T-cell (primary cell): ENCODE measurements at regions of chr2 and their contacts with region 1.

Region 1: DNA sequence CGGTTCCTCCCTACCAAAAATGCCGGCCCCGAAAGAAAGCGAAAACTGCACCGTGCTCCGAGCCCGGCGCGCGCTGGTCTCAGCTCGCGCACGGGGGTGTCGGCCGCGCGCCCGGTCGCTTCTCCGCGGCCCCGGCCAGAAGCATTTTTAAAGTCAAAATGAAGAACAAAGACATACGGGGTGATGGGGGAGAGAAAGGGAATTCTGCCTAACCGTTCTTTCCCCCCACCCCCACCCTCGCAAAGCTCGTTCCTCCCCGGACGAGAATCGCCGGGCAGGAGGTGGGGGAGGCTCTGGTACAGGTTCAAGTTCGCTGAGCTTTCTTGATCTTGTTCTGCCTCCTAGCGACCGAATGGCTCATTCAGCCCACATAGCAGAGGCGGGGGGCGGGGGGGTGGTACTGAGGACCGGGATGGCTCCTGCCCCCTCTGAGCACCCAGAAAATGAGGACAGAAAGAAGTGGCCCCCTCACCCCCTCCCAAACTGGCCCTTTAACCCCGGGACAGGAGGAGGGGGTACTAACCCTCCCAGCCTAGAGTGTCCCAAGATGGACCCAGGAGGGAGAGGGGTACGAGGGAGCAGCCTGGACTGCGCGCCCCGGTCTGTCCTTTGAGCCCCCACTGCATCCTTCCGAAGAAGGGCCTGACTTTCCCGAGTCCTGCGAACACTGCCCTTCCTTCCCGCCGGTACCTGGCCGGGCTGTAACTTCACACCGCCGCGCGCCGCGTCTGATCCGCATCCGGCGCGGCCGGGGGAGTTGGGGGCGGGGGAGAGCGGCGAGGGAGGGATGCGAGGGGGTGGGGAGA is 3.1 kb downstream of the BCL11A start:
- DNase-seq: peak in 22 of 35 experiments; percentile 22 to 68 (median 42)
- ATAC-seq: peak; percentile 47 to 64 (median 55)
- H3K4me3 ChIP-seq: peak overlapping the region; percentile 54 to 97
- H3K4me3 Mint-ChIP-seq: peak overlapping the region; percentile 79 to 93 (median 82)
- H3K27ac ChIP-seq: no peak overlapping the region
- H3K27ac Mint-ChIP-seq: peak overlapping the region in 1 of 2 donors; percentile 59
- H3K4me1 ChIP-seq: peaks cover 32 to 62% of the 10 kb centered on the region in 2 experiments
- H3K4me1 Mint-ChIP-seq: peaks cover 30 to 45% (median 36%) of the 10 kb centered on the region in 3 donors
- H3K27me3 ChIP-seq: peaks cover 0 to 71% of the 10 kb centered on the region in 2 experiments
- H3K27me3 Mint-ChIP-seq: peaks cover 35 to 68% of the 10 kb centered on the region in 2 donors

Region 2: GRCh38 chr2:59301466-59302402 is 1248.6 kb before region 1 on chr2:
- CTCF ChIA-PET with region 1: interaction called in 1 of 2 experiments, 12 read pairs
- POLR2A ChIA-PET with region 1: no interaction called
- DNase-seq: peak in 4 of 35 experiments; percentile 0 to 52 (median 6)
- ATAC-seq: peak in 1 of 4 experiments; percentile 51
- H3K4me3 ChIP-seq: no peak overlapping the region
- H3K4me3 Mint-ChIP-seq: no peak overlapping the region
- H3K27ac ChIP-seq: no peak overlapping the region
- H3K27ac Mint-ChIP-seq: no peak overlapping the region
- H3K4me1 ChIP-seq: no peaks in the 10 kb centered on the region
- H3K4me1 Mint-ChIP-seq: no peaks in the 10 kb centered on the region
- H3K27me3 ChIP-seq: no peaks in the 10 kb centered on the region
- H3K27me3 Mint-ChIP-seq: peaks cover 0 to 5% of the 10 kb centered on the region in 2 donors

Region 3: GRCh38 chr2:60634438-60634837 is 84.1 kb after region 1 on chr2:
- CTCF ChIA-PET with region 1: no interaction called
- POLR2A ChIA-PET with region 1: no interaction called
- DNase-seq: no peak
- ATAC-seq: no peak
- H3K4me3 ChIP-seq: no peak overlapping the region
- H3K4me3 Mint-ChIP-seq: no peak overlapping the region
- H3K27ac ChIP-seq: no peak overlapping the region
- H3K27ac Mint-ChIP-seq: no peak overlapping the region
- H3K4me1 ChIP-seq: no peaks in the 10 kb centered on the region
- H3K4me1 Mint-ChIP-seq: no peaks in the 10 kb centered on the region
- H3K27me3 ChIP-seq: peaks cover 0 to 9% of the 10 kb centered on the region in 2 experiments
- H3K27me3 Mint-ChIP-seq: peaks cover 15 to 24% of the 10 kb centered on the region in 2 donors